ENCODE measurements at regions of chr9 and their contacts with region 1.

Region 1: GRCh38 chr9:9790216-9790872 is 822.5 kb downstream of the PTPRD start:
- DNase-seq: peak; percentile 46 to 58
- H3K4me3 ChIP-seq: no peak overlapping the region
- H3K27ac ChIP-seq: no peak overlapping the region
- H3K4me1 ChIP-seq: no peaks in the 10 kb centered on the region
- H3K27me3 ChIP-seq: no peaks in the 10 kb centered on the region
- CTCF ChIP-seq: peak; percentile 47 to 97 (median 84)
- POLR2A ChIP-seq: no peak

Region 2: DNA sequence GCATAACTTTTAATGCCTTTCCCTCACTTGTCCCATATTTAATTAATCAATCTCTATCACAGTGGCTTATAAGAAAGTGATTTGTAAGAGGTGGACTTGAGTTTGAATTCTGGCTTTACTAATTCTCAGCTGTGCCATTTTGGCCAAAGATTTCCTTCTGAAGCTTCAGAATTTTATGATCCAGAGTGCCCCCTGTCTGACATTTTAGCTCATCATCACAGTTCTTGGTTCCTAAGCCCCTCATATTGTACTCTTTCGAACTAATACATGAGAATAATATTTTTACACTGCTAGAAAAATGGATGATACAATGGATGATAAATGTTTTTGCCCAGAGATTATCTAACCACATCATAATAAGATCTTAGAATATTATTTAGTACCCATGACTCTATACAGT is 191.6 kb before region 1 on chr9:
- intact Hi-C with region 1: loop called (anchors 5 kb)
- DNase-seq: no peak
- H3K4me3 ChIP-seq: no peak overlapping the region
- H3K27ac ChIP-seq: no peak overlapping the region
- H3K4me1 ChIP-seq: no peaks in the 10 kb centered on the region
- H3K27me3 ChIP-seq: no peaks in the 10 kb centered on the region
- CTCF ChIP-seq: no peak
- POLR2A ChIP-seq: no peak

Measured in thyroid gland (tissue), 4 donors.